Right ventricle myocardium inferior (tissue), 1 donor: ENCODE measurements at regions of chr9 and their contacts with region 1.

Region 1: DNA sequence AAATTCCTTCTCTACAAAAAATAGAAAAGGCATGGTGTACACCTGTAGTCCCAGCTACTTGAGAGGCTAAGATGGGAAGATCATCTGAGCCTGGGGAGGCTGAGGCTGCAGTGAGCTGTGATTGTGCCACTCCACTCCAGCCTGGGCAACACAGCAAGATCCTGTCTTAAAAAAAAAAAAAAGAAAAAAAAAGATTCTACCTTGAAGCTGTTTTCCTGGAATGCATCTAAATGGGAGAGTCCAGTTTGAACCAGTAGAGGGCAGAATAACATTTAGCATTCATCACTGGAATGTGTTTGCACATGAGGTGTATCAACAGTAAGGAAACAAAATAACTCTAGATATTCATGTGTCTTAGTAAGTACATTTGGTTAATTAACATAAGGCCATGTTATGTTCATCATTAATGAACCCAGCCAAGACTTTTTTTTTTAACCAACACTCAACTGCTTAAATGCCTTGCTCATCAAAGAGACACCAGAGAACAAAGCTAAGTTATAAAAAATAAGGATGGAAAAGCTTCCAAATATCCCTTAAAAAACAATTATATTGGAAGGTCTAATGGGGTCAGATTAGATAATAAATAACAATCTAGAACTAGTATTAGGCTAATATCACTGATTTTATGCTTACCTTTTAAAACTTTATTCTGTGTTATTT is 16.1 kb downstream of the IFNE start:
- DNase-seq: no peak
- ATAC-seq: no peak

Region 2: DNA sequence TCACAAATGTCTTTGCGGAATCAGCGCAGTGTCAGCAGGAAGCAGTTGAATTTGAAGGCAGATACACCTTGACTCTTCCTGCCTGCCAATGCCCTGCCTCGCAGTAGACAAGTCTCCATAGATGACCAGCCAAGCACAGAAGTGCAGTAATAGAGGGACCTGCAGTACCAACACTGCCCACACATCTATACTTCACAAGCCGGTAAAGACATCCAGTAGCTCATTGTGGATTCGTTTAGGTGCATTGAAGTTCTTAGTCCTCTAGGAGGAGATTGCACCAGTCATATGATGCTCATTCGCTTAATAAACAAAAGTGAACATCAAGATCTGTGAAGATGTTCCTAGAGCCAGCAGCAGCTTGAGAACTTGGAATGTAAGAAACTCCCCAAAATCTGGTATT is 73.7 kb before region 1 on chr9:
- intact Hi-C with region 1: no loop called
- DNase-seq: no peak
- ATAC-seq: no peak

Region 3: DNA sequence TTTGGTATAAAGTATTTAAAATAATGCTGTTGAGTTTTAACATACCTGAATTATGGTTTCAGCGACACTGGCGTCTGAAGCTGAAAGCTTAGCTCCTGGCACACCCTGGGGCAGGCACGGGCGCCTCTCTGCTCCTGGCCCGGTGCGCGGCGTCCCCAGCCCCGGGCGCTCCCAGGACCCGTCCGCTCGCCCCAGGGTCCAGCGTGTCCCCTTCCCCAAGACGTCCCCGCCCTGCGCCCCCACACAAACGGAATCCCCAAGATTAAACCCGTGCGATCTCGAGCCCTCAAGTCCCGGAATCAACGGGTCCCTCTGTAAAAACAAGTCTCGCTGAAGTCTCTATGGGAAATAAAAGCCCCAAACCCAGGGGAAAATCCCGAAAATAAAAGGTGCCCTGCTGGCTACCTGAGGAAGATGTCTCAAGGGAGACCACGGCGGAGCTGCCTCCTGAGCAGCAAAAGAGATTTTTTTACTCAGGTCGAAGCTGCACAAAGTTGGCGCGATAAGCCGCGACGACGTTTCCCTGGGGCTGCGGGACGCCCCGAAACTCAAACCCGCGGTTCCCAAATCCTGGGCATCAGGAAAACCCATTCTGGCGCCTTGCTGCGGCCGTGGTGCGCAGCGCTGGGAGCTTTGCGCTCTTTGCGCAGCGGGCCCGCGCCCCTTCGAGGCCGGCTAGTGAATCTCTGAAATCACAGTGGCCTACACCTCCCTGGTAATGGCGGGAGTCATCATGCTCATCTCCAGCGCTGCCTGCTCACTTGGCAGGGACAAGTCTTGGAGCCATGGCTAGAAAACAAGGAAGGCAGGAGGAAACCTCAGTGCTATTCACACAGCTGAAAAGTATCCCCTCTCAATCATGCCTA is 63.4 kb before region 1 on chr9:
- intact Hi-C with region 1: loop called (anchors 10 kb)
- DNase-seq: no peak
- ATAC-seq: no peak

Region 4: DNA sequence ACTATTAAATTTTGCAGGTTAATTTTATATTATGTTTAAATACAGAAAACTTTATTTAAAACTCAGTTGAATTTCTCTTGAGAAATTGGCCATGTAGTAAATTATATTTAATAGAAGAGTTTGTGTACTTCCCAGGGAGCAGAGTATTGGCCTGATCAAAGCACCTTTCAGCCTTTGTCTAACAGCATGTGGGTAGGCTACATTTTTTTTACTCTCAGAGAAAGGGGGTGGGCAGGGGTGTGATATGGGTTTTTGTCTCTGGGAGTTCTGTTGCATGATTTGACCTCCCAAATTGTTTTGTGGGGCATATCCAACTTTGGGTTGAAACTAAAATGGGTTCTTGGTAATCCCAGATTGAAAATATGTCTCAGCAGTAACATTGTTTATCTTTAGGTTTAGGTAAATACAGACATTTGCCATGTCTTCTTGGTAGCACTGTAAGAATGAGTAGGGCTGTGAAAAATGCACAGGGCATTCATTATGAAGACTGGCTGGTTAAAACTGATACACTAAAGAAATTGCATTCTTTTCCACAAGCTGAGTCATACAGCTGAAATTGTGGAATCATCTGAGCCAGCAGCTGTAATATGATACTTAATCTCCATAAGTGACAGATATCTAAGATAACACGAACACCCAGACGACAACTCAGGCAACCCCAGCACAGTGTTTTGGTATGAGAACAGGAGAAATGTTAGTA is 618.5 kb after region 1 on chr9:
- intact Hi-C with region 1: no loop called
- DNase-seq: no peak
- ATAC-seq: no peak